ENCODE measurements at regions of chr2 and their contacts with region 1.

Region 1: GRCh38 chr2:47354013-47354847 is 48.7 kb upstream of the MSH2 start:
- DNase-seq: peak; percentile 66
- H3K4me3 ChIP-seq: no peak overlapping the region
- H3K27ac ChIP-seq: peak overlapping the region; percentile 83 to 88 (median 84)
- H3K4me1 ChIP-seq: peaks cover 5 to 67% (median 46%) of the 10 kb centered on the region in 4 donors
- H3K27me3 ChIP-seq: no peaks in the 10 kb centered on the region
- CTCF ChIP-seq: no peak
- EP300 ChIP-seq: no peak
- POLR2A ChIP-seq: no peak

Region 2: DNA sequence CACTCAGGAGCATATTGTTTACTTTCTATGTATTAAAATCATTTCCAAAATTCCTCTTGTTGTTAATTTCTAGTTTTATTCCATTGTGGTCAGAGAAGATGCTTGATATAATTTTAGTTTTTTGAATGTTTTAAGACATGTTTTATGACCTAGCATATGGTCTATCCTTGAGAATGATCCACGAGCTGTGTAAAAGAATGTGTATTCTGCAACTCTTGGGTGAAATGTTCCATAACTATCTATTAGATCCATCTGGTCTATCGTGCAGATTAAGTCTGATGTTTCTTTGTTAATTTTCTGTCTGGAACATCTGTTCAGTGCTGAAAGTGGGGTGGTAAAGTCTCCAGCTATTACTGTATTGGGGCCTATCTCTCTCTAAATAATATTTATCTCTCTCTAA is 1140.3 kb before region 1 on chr2:
- in situ Hi-C with region 1: no loop called
- intact Hi-C with region 1: loop called (anchors 5 kb)
- DNase-seq: no peak
- H3K4me3 ChIP-seq: no peak overlapping the region
- H3K27ac ChIP-seq: no peak overlapping the region
- H3K4me1 ChIP-seq: no peaks in the 10 kb centered on the region
- H3K27me3 ChIP-seq: no peaks in the 10 kb centered on the region
- CTCF ChIP-seq: no peak
- EP300 ChIP-seq: no peak
- POLR2A ChIP-seq: no peak

Region 3: DNA sequence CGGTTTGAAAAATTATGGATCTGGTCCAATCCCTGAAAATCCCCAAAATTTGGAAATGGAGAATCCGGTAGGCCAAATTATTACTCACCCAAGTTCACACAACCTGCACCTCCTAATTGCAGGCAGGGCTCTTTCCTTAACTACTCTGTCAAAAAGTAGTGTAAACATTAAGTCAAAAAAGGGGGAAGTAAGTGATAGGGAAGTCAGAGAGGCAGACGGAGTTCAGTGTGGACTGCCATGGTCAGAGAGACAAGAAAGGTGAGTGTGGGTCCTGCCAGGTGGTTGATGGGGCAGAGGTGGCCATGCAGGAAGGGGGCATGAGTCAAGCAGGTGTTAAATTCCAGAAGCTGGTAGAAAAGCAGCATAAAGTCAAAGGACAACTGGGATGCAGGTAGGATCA is 94.4 kb before region 1 on chr2:
- in situ Hi-C with region 1: no loop called
- intact Hi-C with region 1: no loop called
- DNase-seq: no peak
- H3K4me3 ChIP-seq: no peak overlapping the region
- H3K27ac ChIP-seq: no peak overlapping the region
- H3K4me1 ChIP-seq: peaks cover 0 to 3% (median under 1%) of the 10 kb centered on the region in 4 donors
- H3K27me3 ChIP-seq: no peaks in the 10 kb centered on the region
- CTCF ChIP-seq: no peak
- EP300 ChIP-seq: no peak
- POLR2A ChIP-seq: no peak